OCI-LY7 (cell line): ENCODE measurements at regions of chr1 and their contacts with region 1.

Region 1: DNA sequence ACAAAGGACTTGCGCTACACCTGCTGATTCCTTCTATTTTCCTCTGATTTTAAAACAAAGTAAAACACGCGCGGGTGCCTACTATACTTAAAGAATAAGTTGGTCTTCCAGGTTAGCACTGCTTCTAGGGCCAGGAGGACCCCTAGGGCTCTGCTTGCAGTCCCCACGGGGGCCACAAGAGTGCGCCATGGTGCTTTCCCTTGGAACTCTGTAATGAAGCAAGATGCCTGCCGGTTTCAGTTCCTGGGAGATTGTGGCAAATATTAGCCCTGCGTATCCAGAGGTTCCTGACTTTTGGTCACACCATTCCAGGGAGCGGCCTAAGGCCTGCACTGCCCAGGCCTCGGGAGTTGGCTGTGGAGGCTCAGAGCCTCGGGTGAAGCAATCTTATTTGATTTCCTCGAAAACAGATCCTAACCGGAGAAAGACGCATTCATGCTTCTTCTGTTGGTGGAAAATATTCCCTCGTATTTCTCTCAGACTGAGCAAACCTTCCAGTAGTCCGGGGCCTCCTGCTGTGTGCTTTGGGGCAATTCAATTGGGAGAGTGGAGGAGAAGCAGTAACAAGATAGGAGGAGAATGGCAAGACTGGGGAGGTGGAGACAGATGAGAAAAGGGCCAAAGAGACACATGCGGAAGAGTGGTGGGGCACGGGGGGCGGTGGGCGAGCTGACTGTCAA is 25.3 kb downstream of the ADAM30 start:
- DNase-seq: peak; percentile 71
- H3K4me3 ChIP-seq: no peak overlapping the region
- H3K27ac ChIP-seq: no peak overlapping the region
- H3K4me1 ChIP-seq: no peaks in the 10 kb centered on the region
- CTCF ChIP-seq: peak; percentile 95

Region 2: GRCh38 chr1:119885903-119886783 is 15.1 kb after region 1 on chr1:
- CTCF ChIA-PET with region 1: no interaction called
- POLR2A ChIA-PET with region 1: interaction called, 3 read pairs
- intact Hi-C with region 1: loop called (anchors 2 kb)
- DNase-seq: peak; percentile 62
- H3K4me3 ChIP-seq: no peak overlapping the region
- H3K27ac ChIP-seq: no peak overlapping the region
- H3K4me1 ChIP-seq: no peaks in the 10 kb centered on the region
- CTCF ChIP-seq: peak; percentile 94